Psoas muscle (tissue), 8 donors: ENCODE measurements at regions of chr4 and their contacts with region 1.

Region 1: DNA sequence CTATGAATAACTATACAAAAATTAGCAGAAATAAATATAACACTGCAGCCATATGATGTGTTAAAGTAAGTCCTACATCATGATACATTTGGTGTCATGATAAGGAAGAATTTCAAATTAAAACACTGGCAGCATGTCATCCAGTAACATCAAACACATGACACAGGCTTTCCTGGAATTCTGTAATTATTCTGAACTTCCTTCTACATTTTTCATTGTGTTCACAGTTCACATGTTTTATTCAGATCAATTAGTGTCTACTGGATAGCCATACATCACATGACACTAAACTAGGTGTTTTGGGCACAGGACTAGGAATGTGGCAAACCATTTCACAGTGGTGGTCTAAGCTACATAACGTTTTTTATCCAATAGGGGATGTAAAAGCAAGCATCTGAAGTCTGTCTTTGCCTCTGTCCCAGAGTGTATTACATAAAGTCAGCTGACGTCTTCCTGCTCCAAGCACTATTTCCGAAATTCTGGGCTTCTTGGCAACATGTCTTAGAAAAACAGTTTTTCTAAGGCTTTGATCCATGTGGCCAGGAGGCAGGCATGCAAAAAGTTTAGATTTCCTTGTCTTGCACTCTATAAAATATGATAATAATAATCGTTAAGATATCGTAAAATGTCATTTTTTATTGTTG is 707.9 kb downstream of the CENPC start:
- DNase-seq: no peak
- ATAC-seq: no peak
- H3K4me3 ChIP-seq: no peak overlapping the region
- H3K27ac ChIP-seq: no peak overlapping the region
- H3K4me1 ChIP-seq: no peaks in the 10 kb centered on the region
- H3K27me3 ChIP-seq: no peaks in the 10 kb centered on the region
- CTCF ChIP-seq: no peak

Region 2: DNA sequence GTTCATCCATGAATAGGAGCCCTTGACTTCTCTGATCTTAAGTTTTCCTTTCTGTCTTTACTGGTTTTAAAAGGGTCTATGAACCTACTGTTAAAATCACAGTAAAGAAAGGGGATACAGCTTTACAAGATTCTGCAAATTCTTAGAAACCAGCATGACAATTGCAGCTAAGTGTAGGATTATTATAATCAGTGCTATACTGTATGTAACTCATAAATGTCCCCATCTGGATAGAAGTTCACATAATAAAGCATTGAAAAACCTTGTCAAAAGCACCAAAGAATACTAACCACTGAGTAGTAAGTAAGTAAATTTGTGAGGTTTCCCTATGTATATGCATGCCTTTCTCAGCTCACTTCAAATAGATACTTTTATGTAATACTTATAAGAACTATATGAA is 16.7 kb before region 1 on chr4:
- intact Hi-C with region 1: loop called in 1 of 2 experiments (anchors 1 kb)
- DNase-seq: no peak
- ATAC-seq: no peak
- H3K4me3 ChIP-seq: no peak overlapping the region
- H3K27ac ChIP-seq: no peak overlapping the region
- H3K4me1 ChIP-seq: no peaks in the 10 kb centered on the region
- H3K27me3 ChIP-seq: no peaks in the 10 kb centered on the region
- CTCF ChIP-seq: no peak